Activated T-helper 1 cell treated with anti-CD3 and anti-CD28 coated beads, Interleukin-12 subunit alpha, Interleukin-12 subunit beta, Interleukin-2, Interleukin-4 antibody, amounts not matched to agents 30 ng/mL and 10 ng/mL and 1 ng/mL, durations not matched to agents 14 hours and 24 hours and 36 hours (primary cell): ENCODE measurements at regions of chrX and their contacts with region 1.

Region 1: GRCh38 chrX:130165703-130166502 is at the start of gene AIFM1:
- DNase-seq: peak; percentile 86
- H3K4me3 Mint-ChIP-seq: peak within 1 kb of the TSS; percentile 95
- H3K27ac Mint-ChIP-seq: peak within 1 kb of the TSS; percentile 98
- H3K4me1 Mint-ChIP-seq: peaks cover 20% of the 10 kb centered on the region
- H3K27me3 Mint-ChIP-seq: no peaks in the 10 kb centered on the region
- total RNA-seq, gene AIFM1: 46.0 and 50.2 TPM in 2 replicates

Region 2: DNA sequence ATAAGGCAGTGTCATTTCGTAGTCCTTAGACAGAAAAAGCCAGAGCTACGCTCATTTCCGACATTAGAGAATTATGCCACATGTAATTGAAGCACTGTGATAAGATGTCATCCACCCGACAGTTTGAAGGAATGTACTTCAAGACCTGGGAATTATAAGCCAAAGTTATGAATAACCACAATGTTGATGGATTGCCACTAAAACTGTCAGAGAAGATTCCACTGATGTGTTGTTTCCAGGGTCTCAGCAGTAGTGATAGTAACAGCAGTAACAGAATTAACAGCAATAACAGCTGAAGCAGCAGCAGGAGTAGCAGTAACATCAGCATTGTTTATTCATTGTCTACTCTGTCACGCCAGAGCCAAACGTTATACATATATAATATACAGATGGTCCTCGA is 30.6 kb after region 1 on chrX:
- intact Hi-C with region 1: loop called (anchors 1 kb)
- DNase-seq: no peak
- H3K4me3 Mint-ChIP-seq: no peak overlapping the region
- H3K27ac Mint-ChIP-seq: no peak overlapping the region
- H3K4me1 Mint-ChIP-seq: peaks cover 4% of the 10 kb centered on the region
- H3K27me3 Mint-ChIP-seq: peaks cover 2% of the 10 kb centered on the region

Region 3: DNA sequence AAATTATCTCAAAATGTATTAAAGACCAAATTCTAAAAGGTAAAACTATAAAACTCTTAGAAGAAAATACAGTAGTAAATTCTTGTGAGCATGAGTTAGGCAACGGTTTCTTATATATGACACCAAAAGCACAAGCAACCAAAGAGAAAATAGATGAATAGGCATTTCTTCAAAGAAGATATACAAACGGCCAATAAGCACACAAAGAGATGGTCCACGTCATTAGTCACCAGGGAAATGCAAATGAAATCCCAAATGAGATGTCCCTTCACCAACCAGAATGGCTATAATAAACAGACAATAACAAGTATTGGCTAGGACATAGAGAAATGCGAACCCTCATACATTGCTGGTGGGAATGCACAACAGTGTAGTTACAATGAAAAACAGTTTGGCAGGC is 50.4 kb after region 1 on chrX:
- intact Hi-C with region 1: no loop called
- DNase-seq: no peak
- H3K4me3 Mint-ChIP-seq: no peak overlapping the region
- H3K27ac Mint-ChIP-seq: no peak overlapping the region
- H3K4me1 Mint-ChIP-seq: peaks cover 16% of the 10 kb centered on the region
- H3K27me3 Mint-ChIP-seq: no peaks in the 10 kb centered on the region